Right ventricle myocardium inferior (tissue), 1 donor: ENCODE measurements at regions of chr5 and their contacts with region 1.

Region 1: GRCh38 chr5:153496835-153497234 is 6.4 kb downstream of the GRIA1 start:
- DNase-seq: no peak
- ATAC-seq: peak; percentile 44

Region 2: GRCh38 chr5:153429761-153430380 is 67.0 kb before region 1 on chr5:
- intact Hi-C with region 1: no loop called
- DNase-seq: no peak
- ATAC-seq: no peak

Region 3: GRCh38 chr5:153711755-153712154 is 214.9 kb after region 1 on chr5:
- intact Hi-C with region 1: loop called (anchors 5 kb)
- DNase-seq: no peak
- ATAC-seq: no peak

Region 4: GRCh38 chr5:153964880-153965645 is 468.2 kb after region 1 on chr5:
- intact Hi-C with region 1: loop called (anchors 1 kb)
- DNase-seq: no peak
- ATAC-seq: peak; percentile 75